ENCODE measurements at regions of chr6 and their contacts with region 1.

Region 1: DNA sequence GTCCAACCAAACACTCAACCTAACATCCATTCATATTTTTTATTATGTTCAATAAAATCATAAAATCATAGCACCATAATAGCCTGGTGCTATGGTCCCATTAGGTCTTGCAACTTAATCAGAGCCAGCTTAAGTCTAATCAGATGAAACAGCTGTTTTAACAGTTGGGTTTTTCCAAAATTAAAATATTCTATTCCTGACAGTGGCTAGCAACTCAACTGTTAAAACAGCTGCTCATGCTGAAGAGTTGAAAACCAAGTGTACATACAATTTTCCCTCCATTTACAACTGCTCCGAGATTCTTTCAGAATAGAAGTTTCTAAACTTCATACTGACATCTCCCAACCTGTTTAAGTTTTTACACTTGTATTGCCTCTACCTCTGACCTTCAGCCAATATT is 89.5 kb downstream of the UBE3D start:
- DNase-seq: no peak
- ATAC-seq: no peak
- H3K4me3 ChIP-seq: no peak overlapping the region
- H3K27ac ChIP-seq: no peak overlapping the region
- H3K4me1 ChIP-seq: peaks cover 35% of the 10 kb centered on the region
- H3K27me3 ChIP-seq: no peaks in the 10 kb centered on the region
- CTCF ChIP-seq: no peak

Region 2: DNA sequence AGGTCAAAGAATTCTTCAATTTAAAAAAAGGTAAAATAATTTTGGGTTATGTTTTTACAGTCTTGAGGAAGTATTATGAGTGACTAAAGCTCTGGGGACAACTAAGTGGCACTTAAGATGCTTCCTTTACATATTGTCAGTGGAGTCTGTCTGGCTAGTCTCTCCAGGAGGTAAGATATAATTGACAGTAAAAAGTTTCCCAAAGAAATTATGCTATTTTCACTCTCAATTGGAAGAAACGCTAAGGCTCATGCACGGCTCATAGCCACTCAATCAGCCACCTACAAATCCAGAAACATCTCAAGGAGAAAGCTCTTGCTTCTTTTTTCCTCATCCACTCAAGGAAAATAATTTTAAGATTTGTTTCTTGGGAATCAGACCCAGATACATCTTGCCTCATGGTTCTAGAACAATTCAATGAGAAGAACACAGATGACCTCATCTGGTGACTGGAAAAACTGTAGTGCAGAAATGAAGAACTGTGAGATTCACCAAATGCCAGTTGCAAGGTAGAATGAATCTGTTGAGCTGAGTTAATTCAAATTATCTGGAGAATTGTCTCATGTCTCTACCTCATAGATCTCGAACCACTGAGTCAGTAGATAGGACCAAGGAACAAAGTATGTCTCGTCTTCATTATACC is 359.7 kb before region 1 on chr6:
- CTCF ChIA-PET with region 1: no interaction called
- POLR2A ChIA-PET with region 1: interaction called, 10 read pairs
- intact Hi-C with region 1: no loop called
- DNase-seq: no peak
- ATAC-seq: no peak
- H3K4me3 ChIP-seq: no peak overlapping the region
- H3K27ac ChIP-seq: no peak overlapping the region
- H3K4me1 ChIP-seq: no peaks in the 10 kb centered on the region; the same call in 1 of the 2 replicates
- H3K27me3 ChIP-seq: no peaks in the 10 kb centered on the region
- CTCF ChIP-seq: 0 out of 2 replicates have a peak, but pooled peaks have one; percentile 14

Region 3: GRCh38 chr6:82862543-82862942 is 113.6 kb before region 1 on chr6:
- CTCF ChIA-PET with region 1: no interaction called
- POLR2A ChIA-PET with region 1: no interaction called
- intact Hi-C with region 1: loop called (anchors 5 kb)
- DNase-seq: peak; percentile 67
- ATAC-seq: peak; percentile 75
- H3K4me3 ChIP-seq: 0 out of 2 replicates have a peak overlapping the region, but pooled peaks have one; percentile 15
- H3K27ac ChIP-seq: no peak overlapping the region
- H3K4me1 ChIP-seq: peaks cover 29% of the 10 kb centered on the region
- H3K27me3 ChIP-seq: no peaks in the 10 kb centered on the region
- CTCF ChIP-seq: no peak

Region 4: DNA sequence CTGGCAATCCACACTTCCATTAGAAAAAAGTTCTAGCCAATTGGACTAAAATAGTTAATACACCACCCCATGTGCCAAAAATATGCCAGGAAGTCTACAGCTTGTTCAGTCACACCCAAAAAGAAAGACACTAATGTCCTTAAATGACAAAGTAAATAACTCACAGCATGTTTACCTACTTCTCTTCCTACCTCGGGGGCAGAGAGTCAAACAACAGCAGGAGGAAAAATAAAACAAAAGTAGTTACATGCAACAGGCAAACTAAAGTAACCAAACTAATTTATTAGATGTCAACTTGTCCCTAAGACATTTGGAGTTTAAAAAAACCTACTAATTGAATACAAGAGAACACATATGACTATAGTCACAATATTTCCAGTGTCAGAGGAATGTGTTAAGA is 32.5 kb after region 1 on chr6:
- CTCF ChIA-PET with region 1: no interaction called
- POLR2A ChIA-PET with region 1: no interaction called
- intact Hi-C with region 1: loop called (anchors 2 kb)
- DNase-seq: peak; percentile 35
- ATAC-seq: peak; percentile 61
- H3K4me3 ChIP-seq: no peak overlapping the region
- H3K27ac ChIP-seq: no peak overlapping the region
- H3K4me1 ChIP-seq: peaks cover 11% of the 10 kb centered on the region
- H3K27me3 ChIP-seq: no peaks in the 10 kb centered on the region
- CTCF ChIP-seq: no peak

Measured in PC-3 (cell line).